ENCODE measurements at regions of chr9 and their contacts with region 1.

Region 1: GRCh38 chr9:137200311-137201204 is at the start of gene TPRN:
- DNase-seq: peak; percentile 100
- H3K4me3 ChIP-seq: peak within 1 kb of the TSS; percentile 54 to 67 (median 66)
- H3K27ac ChIP-seq: peak within 1 kb of the TSS; percentile 78 to 84 (median 82)
- H3K4me1 ChIP-seq: peaks cover 0 to 68% (median 66%) of the 10 kb centered on the region in 4 donors
- H3K27me3 ChIP-seq: no peaks in the 10 kb centered on the region
- CTCF ChIP-seq: no peak
- EP300 ChIP-seq: no peak
- POLR2A ChIP-seq: peak; percentile 39 to 53
- total RNA-seq, gene TPRN: 3.0 to 4.6 (median 3.8) TPM

Region 2: GRCh38 chr9:137127301-137128157 is 73.0 kb before region 1 on chr9:
- intact Hi-C with region 1: no loop called
- DNase-seq: no peak
- H3K4me3 ChIP-seq: peak overlapping the region in 2 of 4 donors; percentile 9 to 17
- H3K27ac ChIP-seq: peak overlapping the region; percentile 4 to 63 (median 32)
- H3K4me1 ChIP-seq: peaks cover 0 to 31% (median 23%) of the 10 kb centered on the region in 4 donors
- H3K27me3 ChIP-seq: peaks cover 0 to 16% (median 0%) of the 10 kb centered on the region in 3 donors
- CTCF ChIP-seq: no peak
- EP300 ChIP-seq: no peak
- POLR2A ChIP-seq: no peak

Region 3: GRCh38 chr9:137188490-137189296 is 11.9 kb before region 1 on chr9 and contains the starts of genes ANAPC2 and SSNA1:
- intact Hi-C with region 1: loop called (anchors 2 kb)
- DNase-seq: peak; percentile 96
- H3K4me3 ChIP-seq: peak within 1 kb of the TSS; percentile 62 to 96 (median 72)
- H3K27ac ChIP-seq: peak within 1 kb of the TSS; percentile 95 to 99 (median 97)
- H3K4me1 ChIP-seq: peaks cover 0 to 47% (median 45%) of the 10 kb centered on the region in 4 donors
- H3K27me3 ChIP-seq: no peaks in the 10 kb centered on the region
- CTCF ChIP-seq: no peak
- EP300 ChIP-seq: no peak
- POLR2A ChIP-seq: peak; percentile 70 to 72
- total RNA-seq, gene ANAPC2: 21.0 to 27.4 (median 24.6) TPM
- total RNA-seq, gene SSNA1: 39.6 to 122 (median 76.3) TPM

Region 4: GRCh38 chr9:137240861-137241489 is 40.4 kb after region 1 on chr9 and contains the start of gene TUBB4B:
- intact Hi-C with region 1: loop called (anchors 2 kb)
- DNase-seq: peak; percentile 100
- H3K4me3 ChIP-seq: peak within 1 kb of the TSS; percentile 79 to 90 (median 86)
- H3K27ac ChIP-seq: peak within 1 kb of the TSS; percentile 98 to 100 (median 98)
- H3K4me1 ChIP-seq: peaks cover 2 to 69% (median 53%) of the 10 kb centered on the region in 4 donors
- H3K27me3 ChIP-seq: no peaks in the 10 kb centered on the region
- CTCF ChIP-seq: no peak
- EP300 ChIP-seq: no peak
- POLR2A ChIP-seq: peak; percentile 100
- total RNA-seq, gene TUBB4B: 141 to 196 (median 164) TPM

Region 5: DNA sequence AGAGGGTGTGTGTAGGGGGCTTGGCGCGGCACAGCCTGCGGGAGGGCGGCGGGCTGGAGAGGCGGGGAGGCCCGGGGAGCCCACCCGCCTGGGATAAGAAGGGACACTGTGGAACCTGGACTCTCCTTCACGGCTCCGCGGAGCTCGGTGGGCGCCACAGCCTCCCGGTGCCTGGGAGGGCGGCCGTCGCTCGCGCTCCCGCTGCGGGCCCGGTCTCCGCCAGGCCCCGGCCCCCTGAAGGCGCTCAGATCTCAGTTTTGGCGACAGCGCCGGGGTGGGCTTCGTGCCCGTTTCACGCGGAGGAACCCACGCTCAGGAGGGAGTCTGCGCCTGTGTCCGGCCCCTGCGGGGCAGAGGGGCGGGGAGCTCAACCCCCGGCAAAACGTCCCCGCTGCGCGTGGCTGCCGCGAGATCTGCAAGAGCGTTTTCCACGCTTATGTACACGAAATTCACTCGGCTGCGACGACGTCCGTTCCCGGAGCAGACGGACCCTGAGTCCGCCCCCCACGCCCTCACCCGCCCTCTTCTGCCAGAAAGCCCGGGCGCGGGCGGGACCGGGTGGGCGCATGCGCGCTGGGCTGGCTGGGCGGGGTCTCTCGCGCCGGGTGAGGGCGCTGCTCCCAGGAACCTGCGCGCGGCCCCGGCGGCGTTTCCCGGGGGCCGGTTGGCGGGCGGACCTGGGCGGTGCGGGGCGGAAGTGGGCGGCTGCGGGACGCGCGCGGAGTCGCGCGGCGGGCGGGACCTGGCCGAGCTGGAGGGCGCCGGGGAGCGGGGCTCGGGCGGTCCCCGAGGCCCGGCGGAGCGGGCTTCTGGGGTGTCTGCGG is 54.3 kb after region 1 on chr9 and contains the start of gene NELFB:
- intact Hi-C with region 1: loop called (anchors 5 kb)
- DNase-seq: peak; percentile 95
- H3K4me3 ChIP-seq: peak within 1 kb of the TSS; percentile 81 to 95 (median 84)
- H3K27ac ChIP-seq: peak within 1 kb of the TSS; percentile 83 to 88 (median 86)
- H3K4me1 ChIP-seq: peaks cover 0 to 27% (median 26%) of the 10 kb centered on the region in 4 donors
- H3K27me3 ChIP-seq: peaks cover 0 to 10% (median 6%) of the 10 kb centered on the region in 3 donors
- CTCF ChIP-seq: no peak
- EP300 ChIP-seq: no peak
- POLR2A ChIP-seq: peak in 1 of 2 donors; percentile 48
- total RNA-seq, gene NELFB: 24.7 to 36.5 (median 33.2) TPM

Region 6: DNA sequence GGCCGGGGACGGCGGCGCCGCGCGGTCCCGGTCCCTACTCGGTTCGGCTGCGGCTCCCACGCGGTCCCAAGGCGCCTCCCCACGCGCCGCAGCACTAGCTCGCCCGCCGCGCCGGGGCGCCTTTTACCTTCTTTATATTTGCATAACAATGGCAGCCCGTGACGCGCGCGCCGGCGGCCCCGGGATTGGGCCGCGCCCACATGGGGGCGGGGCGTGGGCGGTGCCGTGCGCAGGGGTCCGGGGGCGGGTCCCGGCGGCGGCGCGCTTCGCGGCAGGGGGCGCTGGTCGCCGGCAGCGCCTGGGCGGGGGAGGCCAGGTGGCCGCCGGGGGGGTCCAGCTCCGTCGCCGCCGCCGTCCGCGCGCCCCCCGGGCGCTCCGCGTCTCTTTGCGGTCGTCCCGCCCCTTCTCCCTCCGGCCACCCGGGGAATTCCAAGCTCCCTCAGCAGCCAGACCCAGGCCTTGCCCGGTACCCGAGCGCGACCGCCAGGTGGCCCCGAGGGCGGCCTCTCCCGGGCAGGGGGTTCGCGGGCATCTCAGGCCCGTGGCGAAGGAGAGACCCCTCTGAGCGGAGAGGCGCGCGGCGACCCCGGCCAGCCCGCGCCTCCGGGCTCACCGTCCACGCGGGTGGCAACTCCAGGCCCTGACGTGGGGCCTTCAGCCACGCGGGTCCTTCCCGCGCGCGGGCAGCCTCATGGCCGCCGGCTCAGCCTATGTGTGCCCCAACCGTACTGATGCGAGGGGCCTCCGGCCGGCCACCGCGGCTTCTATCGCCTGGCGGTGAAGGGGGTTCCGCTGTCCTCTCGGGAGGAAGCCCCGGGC is 101.8 kb after region 1 on chr9 and contains the start of gene NRARP:
- intact Hi-C with region 1: no loop called
- DNase-seq: peak; percentile 88
- H3K4me3 ChIP-seq: peak within 1 kb of the TSS; percentile 19 to 50 (median 41)
- H3K27ac ChIP-seq: peak within 1 kb of the TSS; percentile 63 to 77 (median 68)
- H3K4me1 ChIP-seq: peaks cover 0 to 62% (median 53%) of the 10 kb centered on the region in 4 donors
- H3K27me3 ChIP-seq: peaks cover 71 to 94% (median 91%) of the 10 kb centered on the region in 3 donors
- CTCF ChIP-seq: peak in 3 of 4 experiments; percentile 18 to 22 (median 19)
- EP300 ChIP-seq: no peak
- POLR2A ChIP-seq: no peak
- total RNA-seq, gene NRARP: 1.8 to 2.9 (median 2.8) TPM in 3 of 4 donors, not detected in the other